HepG2 (cell line): ENCODE measurements at regions of chr2 and their contacts with region 1.

Region 1: DNA sequence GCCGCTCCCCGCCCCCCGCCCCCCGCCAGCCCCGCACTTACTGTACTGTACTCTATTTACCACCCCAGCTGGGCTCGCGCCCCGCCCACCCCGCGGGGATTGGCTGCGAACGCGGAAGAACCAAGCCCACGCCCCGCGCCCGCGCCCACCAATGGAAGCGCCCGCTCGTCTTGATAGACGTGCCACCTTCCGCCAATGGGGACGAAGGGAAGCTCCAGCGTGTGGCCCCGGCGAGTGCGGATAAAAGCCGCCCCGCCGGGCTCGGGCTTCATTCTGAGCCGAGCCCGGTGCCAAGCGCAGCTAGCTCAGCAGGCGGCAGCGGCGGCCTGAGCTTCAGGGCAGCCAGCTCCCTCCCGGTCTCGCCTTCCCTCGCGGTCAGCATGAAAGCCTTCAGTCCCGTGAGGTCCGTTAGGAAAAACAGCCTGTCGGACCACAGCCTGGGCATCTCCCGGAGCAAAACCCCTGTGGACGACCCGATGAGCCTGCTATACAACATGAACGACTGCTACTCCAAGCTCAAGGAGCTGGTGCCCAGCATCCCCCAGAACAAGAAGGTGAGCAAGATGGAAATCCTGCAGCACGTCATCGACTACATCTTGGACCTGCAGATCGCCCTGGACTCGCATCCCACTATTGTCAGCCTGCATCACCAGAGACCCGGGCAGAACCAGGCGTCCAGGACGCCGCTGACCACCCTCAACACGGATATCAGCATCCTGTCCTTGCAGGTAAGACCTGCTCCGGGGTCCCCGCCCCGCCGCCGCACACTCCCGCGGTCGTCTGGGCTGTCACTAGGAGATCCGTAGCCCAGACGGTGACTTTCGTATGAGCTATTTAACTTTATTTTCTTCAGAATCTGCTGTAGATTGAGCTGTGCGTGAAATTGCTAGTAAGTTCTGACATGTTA is at the start of gene ID2:
- DNase-seq: peak; percentile 99
- ATAC-seq: peak; percentile 44
- H3K4me3 ChIP-seq: peak within 1 kb of the TSS; percentile 73 to 100 (median 100)
- H3K27ac ChIP-seq: peak within 1 kb of the TSS; percentile 100
- H3K4me1 ChIP-seq: peaks cover 28% of the 10 kb centered on the region
- H3K27me3 ChIP-seq: peaks cover 0 to 8% of the 10 kb centered on the region in 2 experiments; a peak in 1 of 5 replicates
- CTCF ChIP-seq: peak; percentile 29; the same call in 1 of the 2 replicates
- EP300 ChIP-seq: peak in 1 of 2 experiments; percentile 51; a peak in 1 of 4 replicates
- POLR2A ChIP-seq: peak in 1 of 2 experiments; percentile 100; a peak in 2 of 4 replicates
- RAD21 ChIP-seq: peak; percentile 94
- total RNA-seq, gene ID2: 214 and 258 TPM in 2 replicates

Region 2: GRCh38 chr2:7097348-7097895 is 1584.6 kb before region 1 on chr2:
- CTCF ChIA-PET with region 1: no interaction called
- POLR2A ChIA-PET with region 1: no interaction called
- in situ Hi-C with region 1: no loop called
- intact Hi-C with region 1: loop called (anchors 5 kb)
- DNase-seq: peak; percentile 41
- ATAC-seq: peak; percentile 96
- H3K4me3 ChIP-seq: peak overlapping the region in 1 of 3 experiments; percentile 25; a peak in 2 of 6 replicates
- H3K27ac ChIP-seq: no peak overlapping the region
- H3K4me1 ChIP-seq: peaks cover 5% of the 10 kb centered on the region
- H3K27me3 ChIP-seq: no peaks in the 10 kb centered on the region
- CTCF ChIP-seq: peak; percentile 98
- EP300 ChIP-seq: no peak
- POLR2A ChIP-seq: no peak
- RAD21 ChIP-seq: peak; percentile 90

Region 3: GRCh38 chr2:8103083-8103708 is 578.8 kb before region 1 on chr2:
- CTCF ChIA-PET with region 1: no interaction called
- POLR2A ChIA-PET with region 1: no interaction called
- in situ Hi-C with region 1: loop called (anchors 5 kb)
- intact Hi-C with region 1: loop called (anchors 2 kb)
- DNase-seq: peak; percentile 100
- ATAC-seq: peak; percentile 98
- H3K4me3 ChIP-seq: no peak overlapping the region; a peak in 1 of 6 replicates
- H3K27ac ChIP-seq: peak overlapping the region; percentile 65
- H3K4me1 ChIP-seq: peaks cover 63% of the 10 kb centered on the region
- H3K27me3 ChIP-seq: no peaks in the 10 kb centered on the region
- CTCF ChIP-seq: no peak
- EP300 ChIP-seq: peak; percentile 94 to 99
- POLR2A ChIP-seq: no peak
- RAD21 ChIP-seq: peak; percentile 44; the same call in 1 of the 2 replicates

Region 4: DNA sequence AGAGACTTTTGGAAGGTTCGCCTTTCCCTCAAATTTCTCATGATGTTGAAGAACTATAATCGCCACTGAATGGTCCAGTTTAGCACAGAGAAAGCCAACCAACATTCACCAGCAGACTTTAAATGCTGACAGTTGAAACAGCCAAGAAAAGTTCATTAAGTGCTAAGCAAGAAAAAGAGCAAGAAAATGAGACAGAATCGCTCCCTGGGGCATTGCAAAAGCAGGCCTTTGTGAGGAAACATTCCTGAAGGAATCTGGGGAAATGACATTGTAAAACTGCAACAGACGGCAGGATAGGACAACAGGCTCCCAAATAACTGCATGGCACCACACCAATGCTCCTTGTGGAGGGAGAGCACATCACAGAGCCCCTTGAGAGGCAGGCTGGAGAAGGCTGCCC is 269.5 kb before region 1 on chr2:
- CTCF ChIA-PET with region 1: no interaction called
- POLR2A ChIA-PET with region 1: interaction called, 15 read pairs
- in situ Hi-C with region 1: no loop called
- intact Hi-C with region 1: loop called (anchors 5 kb)
- DNase-seq: no peak
- ATAC-seq: no peak; the same call in 2 of the 3 replicates
- H3K4me3 ChIP-seq: no peak overlapping the region
- H3K27ac ChIP-seq: peak overlapping the region; percentile 80
- H3K4me1 ChIP-seq: peaks cover 72% of the 10 kb centered on the region
- H3K27me3 ChIP-seq: no peaks in the 10 kb centered on the region; a peak in 1 of 5 replicates
- CTCF ChIP-seq: no peak
- EP300 ChIP-seq: no peak
- POLR2A ChIP-seq: no peak
- RAD21 ChIP-seq: no peak

Region 5: DNA sequence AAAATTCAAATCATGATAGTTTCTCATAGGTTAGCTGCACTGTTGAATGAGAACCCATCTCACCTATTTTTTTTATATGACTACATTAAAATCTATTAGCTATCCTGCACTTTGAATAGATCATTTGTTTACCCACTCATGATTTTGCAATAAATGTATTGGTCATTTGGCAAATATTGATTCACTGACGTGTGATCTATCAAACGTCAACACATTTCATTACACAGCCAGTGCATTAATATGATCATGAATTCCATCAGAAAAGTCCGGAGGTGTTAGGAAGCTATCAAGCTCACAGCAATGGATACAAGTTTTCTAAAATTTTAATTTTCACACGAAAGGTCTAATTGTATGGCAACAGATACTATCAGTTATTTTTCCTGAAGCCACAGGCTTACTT is 128.4 kb before region 1 on chr2:
- CTCF ChIA-PET with region 1: no interaction called
- POLR2A ChIA-PET with region 1: no interaction called
- in situ Hi-C with region 1: no loop called
- intact Hi-C with region 1: no loop called
- DNase-seq: no peak
- ATAC-seq: no peak
- H3K4me3 ChIP-seq: no peak overlapping the region
- H3K27ac ChIP-seq: no peak overlapping the region
- H3K4me1 ChIP-seq: peaks cover 8% of the 10 kb centered on the region; the same call in 1 of the 2 replicates
- H3K27me3 ChIP-seq: peaks cover 0 to 27% of the 10 kb centered on the region in 2 experiments; a peak in 4 of 5 replicates
- CTCF ChIP-seq: no peak
- EP300 ChIP-seq: no peak
- POLR2A ChIP-seq: no peak
- RAD21 ChIP-seq: no peak

Region 6: DNA sequence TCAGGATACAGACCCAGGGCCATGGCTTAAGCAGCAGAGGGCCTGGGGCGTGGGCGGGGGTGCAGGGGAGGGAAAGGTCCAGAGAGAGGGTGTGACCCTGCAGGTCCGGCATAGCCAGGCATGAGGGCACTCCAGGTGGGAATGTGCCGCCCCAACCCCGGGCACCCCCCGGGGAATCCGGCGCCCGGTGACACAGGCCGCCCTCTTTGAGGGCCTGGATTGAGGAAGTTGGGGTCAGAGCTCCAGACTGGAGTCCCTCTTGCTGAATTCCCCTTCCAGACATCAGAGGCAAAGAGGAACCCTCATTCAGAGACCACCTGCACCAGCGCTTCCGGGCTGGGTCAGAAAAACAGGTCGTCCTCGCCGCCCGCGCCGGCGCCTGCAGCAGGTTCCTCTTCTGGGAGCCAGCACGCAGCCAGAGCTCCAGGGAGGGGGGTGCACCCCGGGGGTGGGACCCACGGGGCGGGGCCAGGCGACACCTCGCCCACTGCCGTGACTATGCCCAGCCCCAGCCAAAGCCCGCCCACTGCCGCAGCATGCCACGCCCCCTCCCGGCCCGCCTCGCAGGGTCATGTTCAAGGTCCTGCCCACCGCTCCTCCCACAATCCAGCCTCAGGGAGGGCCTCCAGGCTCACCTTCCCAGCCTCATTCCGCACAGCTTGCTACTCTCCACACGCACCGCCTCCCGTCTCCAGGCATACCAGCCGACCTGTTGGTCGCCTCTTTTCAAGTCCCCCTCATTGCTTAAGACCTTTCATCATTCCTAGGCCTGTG is 98.5 kb before region 1 on chr2:
- CTCF ChIA-PET with region 1: no interaction called
- POLR2A ChIA-PET with region 1: interaction called, 15 read pairs
- in situ Hi-C with region 1: no loop called
- intact Hi-C with region 1: no loop called
- DNase-seq: peak; percentile 79
- ATAC-seq: peak; percentile 80
- H3K4me3 ChIP-seq: peak overlapping the region in 1 of 3 experiments; percentile 18; a peak in 1 of 6 replicates
- H3K27ac ChIP-seq: no peak overlapping the region
- H3K4me1 ChIP-seq: peaks cover 71% of the 10 kb centered on the region
- H3K27me3 ChIP-seq: peaks cover 3 to 18% of the 10 kb centered on the region in 2 experiments; a peak in 3 of 5 replicates
- CTCF ChIP-seq: peak; percentile 20; the same call in 1 of the 2 replicates
- EP300 ChIP-seq: peak in 1 of 2 experiments; percentile 23; a peak in 1 of 4 replicates
- POLR2A ChIP-seq: no peak
- RAD21 ChIP-seq: no peak

Region 7: GRCh38 chr2:8628230-8629209 is 53.5 kb before region 1 on chr2:
- CTCF ChIA-PET with region 1: interaction called, 15 read pairs
- POLR2A ChIA-PET with region 1: interaction called, 354 read pairs
- in situ Hi-C with region 1: loop called (anchors 5 kb)
- intact Hi-C with region 1: loop called (anchors 1 kb)
- DNase-seq: no peak
- ATAC-seq: no peak
- H3K4me3 ChIP-seq: peak overlapping the region in 1 of 3 experiments; percentile 80; a peak in 1 of 6 replicates
- H3K27ac ChIP-seq: peak overlapping the region; percentile 84
- H3K4me1 ChIP-seq: peaks cover 100% of the 10 kb centered on the region
- H3K27me3 ChIP-seq: no peaks in the 10 kb centered on the region; a peak in 1 of 5 replicates
- CTCF ChIP-seq: no peak
- EP300 ChIP-seq: no peak
- POLR2A ChIP-seq: no peak
- RAD21 ChIP-seq: no peak

Region 8: GRCh38 chr2:8662239-8662895 is 19.7 kb before region 1 on chr2:
- CTCF ChIA-PET with region 1: no interaction called
- POLR2A ChIA-PET with region 1: interaction called, 61 read pairs
- in situ Hi-C with region 1: no loop called
- intact Hi-C with region 1: no loop called
- DNase-seq: peak; percentile 63
- ATAC-seq: peak; percentile 6; the same call in 1 of the 3 replicates
- H3K4me3 ChIP-seq: no peak overlapping the region
- H3K27ac ChIP-seq: no peak overlapping the region
- H3K4me1 ChIP-seq: peaks cover 56% of the 10 kb centered on the region
- H3K27me3 ChIP-seq: no peaks in the 10 kb centered on the region
- CTCF ChIP-seq: peak; percentile 15; the same call in 1 of the 2 replicates
- EP300 ChIP-seq: peak in 1 of 2 experiments; percentile 41; a peak in 1 of 4 replicates
- POLR2A ChIP-seq: no peak
- RAD21 ChIP-seq: no peak

Region 9: GRCh38 chr2:8872821-8873432 is 190.9 kb after region 1 on chr2:
- CTCF ChIA-PET with region 1: no interaction called
- POLR2A ChIA-PET with region 1: no interaction called
- in situ Hi-C with region 1: no loop called
- intact Hi-C with region 1: no loop called
- DNase-seq: peak; percentile 61
- ATAC-seq: peak; percentile 56
- H3K4me3 ChIP-seq: no peak overlapping the region
- H3K27ac ChIP-seq: no peak overlapping the region
- H3K4me1 ChIP-seq: no peaks in the 10 kb centered on the region
- H3K27me3 ChIP-seq: peaks cover 1 to 4% of the 10 kb centered on the region in 2 experiments; a peak in 1 of 5 replicates
- CTCF ChIP-seq: peak; percentile 69
- EP300 ChIP-seq: no peak
- POLR2A ChIP-seq: no peak
- RAD21 ChIP-seq: no peak

Region 10: GRCh38 chr2:9069543-9069942 is 387.5 kb after region 1 on chr2:
- CTCF ChIA-PET with region 1: no interaction called
- POLR2A ChIA-PET with region 1: no interaction called
- in situ Hi-C with region 1: no loop called
- intact Hi-C with region 1: no loop called
- DNase-seq: no peak
- ATAC-seq: no peak
- H3K4me3 ChIP-seq: no peak overlapping the region
- H3K27ac ChIP-seq: no peak overlapping the region
- H3K4me1 ChIP-seq: no peaks in the 10 kb centered on the region
- H3K27me3 ChIP-seq: no peaks in the 10 kb centered on the region
- CTCF ChIP-seq: no peak
- EP300 ChIP-seq: no peak
- POLR2A ChIP-seq: no peak
- RAD21 ChIP-seq: no peak